AG04450 (cell line): ENCODE measurements at regions of chr10 and their contacts with region 1.

Region 1: DNA sequence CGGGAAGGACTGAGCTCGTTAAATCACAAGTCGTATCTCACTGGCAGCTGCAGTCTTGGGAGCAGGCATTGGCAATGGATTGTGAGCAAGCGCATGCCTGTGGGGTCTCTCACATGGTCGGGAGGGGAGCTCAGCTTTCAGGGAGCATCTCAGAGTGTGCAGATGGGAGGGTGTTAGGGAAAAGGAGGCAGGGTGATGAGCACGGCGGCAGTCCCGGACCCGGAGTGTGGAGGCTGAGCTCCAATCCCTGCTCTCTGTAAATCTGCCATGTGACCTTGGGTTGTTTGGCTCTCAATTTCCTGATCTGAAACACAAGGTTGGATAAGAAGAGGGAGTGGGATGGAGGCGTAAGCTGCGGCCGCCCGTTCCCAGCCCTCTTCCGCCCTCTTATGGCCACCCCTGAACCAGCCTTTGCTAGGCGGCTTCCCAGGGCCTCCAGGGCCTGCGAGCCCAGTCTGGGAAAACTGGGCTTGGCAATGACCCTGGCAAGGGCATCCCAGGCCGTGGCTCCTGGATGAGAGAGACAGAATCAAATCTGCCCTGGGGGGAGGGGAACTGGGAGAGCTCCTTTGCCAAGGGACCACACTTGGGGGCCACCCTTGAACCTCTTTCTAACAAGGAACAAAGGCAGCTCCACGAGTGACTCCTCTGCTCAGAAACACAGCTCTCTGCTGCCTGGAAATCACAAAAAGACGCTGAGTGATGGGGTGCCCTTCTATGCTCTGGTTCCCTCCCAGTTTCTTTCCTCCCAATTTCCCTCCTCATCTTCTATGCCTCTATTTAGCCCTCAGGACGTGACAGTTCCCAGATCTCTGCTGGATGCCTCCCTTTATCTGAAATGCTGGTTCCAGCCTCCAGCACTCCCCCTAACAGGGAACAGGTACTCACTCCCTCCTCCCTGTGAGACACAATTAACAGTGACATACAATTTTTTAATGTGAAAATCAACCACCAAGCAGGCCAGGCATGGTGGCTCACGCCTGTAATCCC is 41.7 kb upstream of the LOXL4 start:
- DNase-seq: peak; percentile 75
- H3K4me3 ChIP-seq: peak overlapping the region; percentile 42
- H3K27ac ChIP-seq: peak overlapping the region; percentile 34
- H3K27me3 ChIP-seq: no peaks in the 10 kb centered on the region
- CTCF ChIP-seq: peak; percentile 87

Region 2: DNA sequence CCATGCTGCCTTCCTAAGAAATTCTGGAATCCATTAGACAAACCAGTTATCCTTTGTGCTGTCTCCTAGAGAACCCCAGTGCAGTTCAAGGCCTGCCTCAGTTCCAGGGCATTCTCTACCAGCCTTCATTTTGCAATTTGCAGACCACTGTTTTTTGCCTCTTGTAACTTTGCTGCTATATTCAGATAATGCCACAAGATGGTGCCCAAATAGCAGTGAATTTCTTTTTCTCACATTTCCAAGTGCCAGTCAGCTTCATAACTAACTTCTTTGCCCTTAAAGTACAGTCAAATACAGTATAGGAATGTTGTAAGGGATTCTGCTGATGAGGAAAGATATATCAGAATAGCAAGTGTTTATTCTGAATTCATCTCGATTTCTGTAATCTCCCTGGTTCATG is 66.8 kb before region 1 on chr10:
- CTCF ChIA-PET with region 1: interaction called, 63 read pairs
- POLR2A ChIA-PET with region 1: interaction called, 5 read pairs
- DNase-seq: no peak
- H3K4me3 ChIP-seq: no peak overlapping the region
- H3K27ac ChIP-seq: no peak overlapping the region
- H3K27me3 ChIP-seq: no peaks in the 10 kb centered on the region
- CTCF ChIP-seq: peak; percentile 69

Region 3: GRCh38 chr10:98295907-98296306 is 13.8 kb before region 1 on chr10:
- CTCF ChIA-PET with region 1: interaction called, 68 read pairs
- POLR2A ChIA-PET with region 1: interaction called, 7 read pairs
- DNase-seq: peak; percentile 23
- H3K4me3 ChIP-seq: no peak overlapping the region
- H3K27ac ChIP-seq: no peak overlapping the region
- H3K27me3 ChIP-seq: peaks cover 26% of the 10 kb centered on the region
- CTCF ChIP-seq: no peak

Region 4: GRCh38 chr10:98361131-98362025 is 51.7 kb after region 1 on chr10:
- CTCF ChIA-PET with region 1: interaction called, 12 read pairs
- POLR2A ChIA-PET with region 1: no interaction called
- DNase-seq: peak; percentile 95
- H3K4me3 ChIP-seq: peak overlapping the region; percentile 34
- H3K27ac ChIP-seq: peak overlapping the region; percentile 97
- H3K27me3 ChIP-seq: no peaks in the 10 kb centered on the region
- CTCF ChIP-seq: no peak

Region 5: GRCh38 chr10:98414932-98415730 is 105.5 kb after region 1 on chr10 and contains the start of gene PYROXD2:
- CTCF ChIA-PET with region 1: interaction called, 11 read pairs
- POLR2A ChIA-PET with region 1: interaction called, 4 read pairs
- DNase-seq: peak; percentile 81
- H3K4me3 ChIP-seq: peak within 1 kb of the TSS; percentile 82
- H3K27ac ChIP-seq: peak within 1 kb of the TSS; percentile 39
- H3K27me3 ChIP-seq: no peaks in the 10 kb centered on the region
- CTCF ChIP-seq: no peak
- polyA plus RNA-seq, gene PYROXD2: 20.3 and 25.6 TPM in 2 replicates